ENCODE measurements at regions of chr5 and their contacts with region 1.

Region 1: GRCh38 chr5:111757355-111758283 is 625 bp upstream of the NREP start:
- DNase-seq: peak; percentile 86
- H3K4me3 Mint-ChIP-seq: peak overlapping the region; percentile 86
- H3K27ac Mint-ChIP-seq: peak overlapping the region; percentile 92
- H3K4me1 Mint-ChIP-seq: peaks cover 31% of the 10 kb centered on the region
- H3K27me3 Mint-ChIP-seq: no peaks in the 10 kb centered on the region

Region 2: DNA sequence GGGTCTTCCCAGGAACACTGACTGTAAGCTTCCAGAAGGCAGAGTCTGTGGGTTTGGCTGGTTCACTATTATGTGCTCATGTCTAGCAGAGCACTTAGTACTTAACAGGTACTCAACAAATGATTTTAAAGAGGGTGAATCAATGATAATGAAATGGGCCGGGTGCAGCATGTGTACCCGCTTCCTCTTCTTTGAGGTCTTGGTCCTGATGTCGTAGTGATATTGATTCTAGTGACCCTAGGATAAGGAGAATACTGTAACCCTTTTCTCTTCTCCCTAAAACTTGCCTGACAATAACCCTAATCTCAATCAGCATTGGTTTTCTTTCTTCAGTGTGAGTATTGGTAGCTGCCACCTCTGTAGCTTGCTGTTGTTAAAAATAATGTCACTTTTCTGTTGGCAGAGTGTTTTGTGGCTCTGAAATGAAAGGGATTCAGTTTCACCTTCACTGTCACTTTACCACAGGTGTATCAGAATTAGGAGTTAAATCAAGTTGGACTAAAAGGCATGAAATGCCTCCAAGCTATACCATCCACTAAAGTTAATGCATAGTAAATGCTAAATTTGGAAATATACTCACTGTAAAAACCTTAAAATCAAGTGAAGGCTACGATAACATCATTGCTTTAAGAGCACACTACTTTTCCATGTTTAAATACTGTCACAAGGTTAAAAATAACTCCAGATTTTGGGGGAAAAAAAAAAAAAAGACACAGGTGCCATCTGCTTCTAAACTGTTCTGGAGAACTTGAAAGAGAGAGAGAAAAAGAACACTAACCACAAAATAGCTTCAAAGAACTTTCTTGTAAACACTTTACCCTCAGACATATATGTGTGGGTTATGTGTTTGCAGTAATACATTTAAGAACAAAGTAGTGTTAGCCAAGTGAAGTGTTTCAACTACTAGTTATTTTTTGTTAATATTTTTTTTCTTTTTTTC is 527.5 kb before region 1 on chr5:
- intact Hi-C with region 1: loop called (anchors 5 kb)
- DNase-seq: no peak
- H3K4me3 Mint-ChIP-seq: peak overlapping the region; percentile 77
- H3K27ac Mint-ChIP-seq: peak overlapping the region; percentile 97
- H3K4me1 Mint-ChIP-seq: peaks cover 76% of the 10 kb centered on the region
- H3K27me3 Mint-ChIP-seq: no peaks in the 10 kb centered on the region

Region 3: GRCh38 chr5:111550279-111551020 is 207.2 kb before region 1 on chr5:
- intact Hi-C with region 1: loop called (anchors 5 kb)
- DNase-seq: peak; percentile 54
- H3K4me3 Mint-ChIP-seq: no peak overlapping the region
- H3K27ac Mint-ChIP-seq: peak overlapping the region; percentile 29
- H3K4me1 Mint-ChIP-seq: peaks cover 31% of the 10 kb centered on the region
- H3K27me3 Mint-ChIP-seq: peaks cover 2% of the 10 kb centered on the region

Region 4: GRCh38 chr5:111628901-111629300 is 128.7 kb before region 1 on chr5:
- intact Hi-C with region 1: loop called (anchors 2 kb)
- DNase-seq: no peak
- H3K4me3 Mint-ChIP-seq: no peak overlapping the region
- H3K27ac Mint-ChIP-seq: no peak overlapping the region
- H3K4me1 Mint-ChIP-seq: peaks cover 17% of the 10 kb centered on the region
- H3K27me3 Mint-ChIP-seq: no peaks in the 10 kb centered on the region

Region 5: DNA sequence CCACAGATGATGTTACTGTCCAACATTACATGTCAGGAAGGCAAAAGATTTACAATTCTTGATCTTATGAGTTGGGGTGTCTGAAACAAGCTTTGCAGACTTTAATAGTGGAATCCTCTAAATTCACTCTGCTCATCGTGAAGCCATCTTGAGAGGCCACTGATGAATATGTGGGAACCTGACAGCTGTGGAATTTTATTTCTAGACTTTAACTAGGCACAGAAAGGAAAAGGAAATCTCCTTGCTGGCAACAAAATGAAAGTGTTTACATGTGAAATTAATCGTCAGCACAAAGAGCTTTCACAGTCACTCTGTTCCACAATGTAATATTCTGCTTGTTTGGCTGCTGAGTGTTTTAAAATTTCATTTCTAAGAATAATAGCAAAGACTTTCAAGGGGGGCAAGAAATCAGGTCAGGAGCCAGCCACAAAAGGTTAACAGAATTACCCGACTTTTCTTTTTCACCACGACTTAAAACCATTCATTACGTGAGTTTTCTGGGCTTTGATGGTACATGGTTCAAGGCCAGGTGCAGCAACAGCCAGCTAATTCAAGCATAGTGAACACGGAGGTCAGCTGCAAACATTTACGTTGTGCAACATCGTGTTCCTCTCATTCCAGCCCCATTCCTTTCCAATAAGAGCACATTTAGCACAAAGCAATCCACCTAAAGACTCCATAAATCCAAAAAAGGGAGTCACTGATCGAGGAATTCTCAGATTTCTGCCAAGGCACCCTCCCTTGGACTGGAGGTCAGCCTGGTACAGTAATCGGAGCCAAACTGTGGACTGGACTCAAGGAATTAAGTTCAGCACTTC is 15.2 kb before region 1 on chr5:
- intact Hi-C with region 1: loop called (anchors 2 kb)
- DNase-seq: no peak
- H3K4me3 Mint-ChIP-seq: peak overlapping the region; percentile 63
- H3K27ac Mint-ChIP-seq: peak overlapping the region; percentile 53
- H3K4me1 Mint-ChIP-seq: peaks cover 46% of the 10 kb centered on the region
- H3K27me3 Mint-ChIP-seq: no peaks in the 10 kb centered on the region